RWPE1 (cell line): ENCODE measurements at regions of chr5 and their contacts with region 1.

Region 1: GRCh38 chr5:174793684-174794328 is 69.4 kb downstream of the MSX2 start:
- DNase-seq: peak; percentile 68
- H3K27ac ChIP-seq: no peak overlapping the region
- CTCF ChIP-seq: peak; percentile 95

Region 2: DNA sequence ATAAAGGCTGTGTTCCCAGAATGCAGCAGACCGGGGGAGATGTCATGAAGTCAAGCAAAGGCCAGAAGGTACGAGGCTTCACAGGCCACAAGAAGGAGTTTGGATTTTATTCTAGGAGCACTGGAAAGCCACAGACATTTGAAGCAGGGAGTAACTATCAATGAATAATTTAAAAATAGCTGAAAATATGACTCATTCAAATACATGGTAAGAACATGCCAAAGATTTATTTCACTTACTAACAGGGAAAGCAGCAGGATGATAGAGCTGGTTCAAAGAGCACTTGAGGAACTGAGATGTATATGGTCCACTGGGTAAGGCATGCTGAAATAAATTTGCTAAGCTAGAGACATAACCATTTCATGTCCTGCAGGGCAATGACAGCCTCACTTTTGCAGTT is 16.2 kb before region 1 on chr5:
- CTCF ChIA-PET with region 1: interaction called, 14 read pairs
- POLR2A ChIA-PET with region 1: no interaction called
- DNase-seq: no peak
- H3K27ac ChIP-seq: no peak overlapping the region
- CTCF ChIP-seq: no peak